K562 (cell line): ENCODE measurements at regions of chr3 and their contacts with region 1.

Region 1: DNA sequence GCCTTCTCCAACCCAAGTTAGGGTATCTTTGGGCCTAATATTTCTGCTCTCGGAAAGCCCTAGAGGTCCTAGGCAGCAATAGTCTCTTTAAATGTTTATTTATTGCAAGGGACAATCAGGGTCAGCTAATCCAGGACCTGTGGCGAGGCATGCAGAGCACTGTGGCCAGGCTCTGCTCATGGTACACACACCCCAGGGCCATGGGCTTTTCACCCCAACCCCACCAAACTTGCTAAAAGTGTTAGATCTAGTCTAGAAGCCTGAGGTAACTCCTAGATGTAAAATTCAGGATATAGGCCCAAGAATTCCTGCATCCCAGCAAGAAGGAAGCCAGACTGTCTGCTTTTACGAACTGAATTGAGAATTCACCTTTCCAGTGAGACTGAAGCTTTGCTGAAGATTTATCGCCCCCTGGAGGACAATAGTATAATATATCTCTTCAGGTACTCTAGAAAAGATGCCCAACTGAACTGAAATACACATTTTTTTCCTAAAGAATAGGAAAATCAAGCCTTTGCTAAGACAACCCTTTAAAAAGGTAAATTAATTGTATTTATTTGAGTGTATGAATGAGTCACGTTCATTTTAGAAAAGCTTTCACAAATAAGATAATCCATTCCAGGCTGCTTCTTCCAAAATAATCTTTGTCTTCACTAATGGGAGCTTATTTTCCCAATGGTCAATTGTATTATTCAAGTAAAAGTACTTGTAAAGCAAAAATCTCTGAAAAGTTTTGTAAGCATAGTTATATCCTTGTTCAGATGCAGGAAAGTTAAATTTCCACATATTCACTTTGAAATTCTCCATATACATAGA is 89.8 kb downstream of the LRRC3B start:
- DNase-seq: peak; percentile 25 to 50 (median 42)
- ATAC-seq: peak; percentile 63; the same call in 1 of the 3 replicates
- H3K4me3 ChIP-seq: no peak overlapping the region
- H3K27ac ChIP-seq: no peak overlapping the region
- H3K4me1 ChIP-seq: no peaks in the 10 kb centered on the region
- H3K27me3 ChIP-seq: no peaks in the 10 kb centered on the region
- CTCF ChIP-seq: peak; percentile 27 to 48 (median 48); a peak in 5 of 6 replicates
- EP300 ChIP-seq: no peak
- POLR2A ChIP-seq: no peak
- RAD21 ChIP-seq: peak; percentile 57 to 70

Region 2: GRCh38 chr3:25843332-25843731 is 869.1 kb before region 1 on chr3:
- CTCF ChIA-PET with region 1: no interaction called
- POLR2A ChIA-PET with region 1: no interaction called
- in situ Hi-C with region 1: no loop called
- intact Hi-C with region 1: loop called (anchors 5 kb)
- DNase-seq: no peak
- ATAC-seq: no peak
- H3K4me3 ChIP-seq: no peak overlapping the region
- H3K27ac ChIP-seq: no peak overlapping the region
- H3K4me1 ChIP-seq: no peaks in the 10 kb centered on the region
- H3K27me3 ChIP-seq: no peaks in the 10 kb centered on the region
- CTCF ChIP-seq: peak in 1 of 3 experiments; percentile 45; a peak in 2 of 6 replicates
- EP300 ChIP-seq: no peak
- POLR2A ChIP-seq: no peak
- RAD21 ChIP-seq: peak; percentile 37 to 48; a peak in 3 of 4 replicates

Region 3: DNA sequence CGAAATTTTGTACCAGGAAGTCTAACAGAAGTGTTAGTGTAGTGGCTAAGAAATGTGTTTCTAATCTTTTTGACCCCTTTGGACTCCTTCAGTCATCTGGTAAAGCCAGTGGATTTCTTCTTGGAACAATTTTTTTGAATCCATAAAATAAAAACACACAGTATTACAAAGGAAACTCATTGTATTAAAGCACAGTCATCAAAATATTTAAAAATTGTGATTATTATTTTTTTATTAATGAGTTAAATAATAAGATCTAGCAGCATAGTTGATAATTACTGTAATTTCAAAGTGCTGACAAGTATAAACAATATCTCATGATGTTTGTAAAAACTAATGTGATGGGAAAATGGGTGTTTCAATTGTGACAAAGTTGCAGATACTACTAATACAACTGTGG is 162.0 kb before region 1 on chr3:
- CTCF ChIA-PET with region 1: no interaction called
- POLR2A ChIA-PET with region 1: no interaction called
- in situ Hi-C with region 1: no loop called
- intact Hi-C with region 1: no loop called
- DNase-seq: no peak
- ATAC-seq: no peak
- H3K4me3 ChIP-seq: no peak overlapping the region
- H3K27ac ChIP-seq: no peak overlapping the region
- H3K4me1 ChIP-seq: no peaks in the 10 kb centered on the region
- H3K27me3 ChIP-seq: no peaks in the 10 kb centered on the region
- CTCF ChIP-seq: no peak
- EP300 ChIP-seq: no peak
- POLR2A ChIP-seq: no peak
- RAD21 ChIP-seq: no peak

Region 4: GRCh38 chr3:27134165-27134796 is 421.9 kb after region 1 on chr3:
- CTCF ChIA-PET with region 1: no interaction called
- POLR2A ChIA-PET with region 1: no interaction called
- in situ Hi-C with region 1: no loop called
- intact Hi-C with region 1: no loop called
- DNase-seq: peak; percentile 53 to 70 (median 58)
- ATAC-seq: peak; percentile 84
- H3K4me3 ChIP-seq: no peak overlapping the region
- H3K27ac ChIP-seq: no peak overlapping the region
- H3K4me1 ChIP-seq: no peaks in the 10 kb centered on the region
- H3K27me3 ChIP-seq: no peaks in the 10 kb centered on the region
- CTCF ChIP-seq: peak; percentile 80 to 83 (median 82)
- EP300 ChIP-seq: no peak
- POLR2A ChIP-seq: no peak
- RAD21 ChIP-seq: peak; percentile 67 to 80